ENCODE measurements at regions of chr5 and their contacts with region 1.

Region 1: DNA sequence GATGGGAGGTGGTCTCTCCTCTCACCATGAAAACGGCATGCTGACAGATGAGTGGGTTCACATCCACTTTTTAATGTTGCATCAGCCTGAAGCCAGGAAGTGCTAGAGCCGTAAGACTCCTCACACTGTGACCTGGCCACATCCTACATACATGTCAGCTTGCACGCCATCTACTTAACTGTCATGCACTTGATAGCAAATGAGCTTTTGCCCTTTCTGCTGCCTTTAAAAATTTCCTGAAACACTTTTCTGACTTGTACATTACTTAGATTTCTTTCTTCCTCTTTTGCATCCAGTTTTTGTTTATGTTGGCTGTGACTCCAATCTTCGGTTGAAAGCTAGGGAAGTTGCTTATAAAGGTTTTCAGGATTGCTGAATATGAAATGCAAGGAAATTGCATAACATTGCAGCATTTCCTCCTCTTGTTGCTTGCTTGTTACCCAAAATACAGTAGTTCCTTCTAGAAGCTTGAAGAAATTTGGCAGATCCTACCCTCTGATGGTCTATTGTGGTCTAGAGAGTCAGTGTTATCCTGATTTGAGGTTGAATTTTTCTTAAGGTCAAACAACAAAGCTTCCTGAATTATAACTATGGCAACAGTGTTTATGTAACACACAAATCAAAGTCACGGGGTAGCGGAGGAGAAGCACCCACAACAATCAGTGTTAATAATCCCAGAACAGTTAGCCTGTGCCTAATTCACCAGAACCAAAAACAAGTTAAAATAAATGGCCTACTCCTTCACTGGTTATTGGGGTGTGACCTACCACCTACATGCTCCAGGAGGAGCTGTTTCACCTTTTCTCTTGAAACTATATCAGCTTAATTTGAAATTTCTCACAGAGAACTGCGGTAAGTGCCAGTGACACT is 232.5 kb downstream of the ARHGAP26 start:
- DNase-seq: no peak
- H3K4me3 ChIP-seq: no peak overlapping the region
- H3K27ac ChIP-seq: no peak overlapping the region; the same call in 1 of the 2 replicates
- H3K4me1 ChIP-seq: peaks cover 0 to 3% (median 3%) of the 10 kb centered on the region in 4 experiments; a peak in 4 of 7 replicates
- H3K27me3 ChIP-seq: no peaks in the 10 kb centered on the region
- CTCF ChIP-seq: peak in 2 of 3 experiments; percentile 42 to 68; a peak in 3 of 4 replicates
- EP300 ChIP-seq: no peak
- POLR2A ChIP-seq: no peak
- RAD21 ChIP-seq: peak; percentile 68 to 71

Region 2: GRCh38 chr5:142984525-142984924 is 18.2 kb before region 1 on chr5:
- CTCF ChIA-PET with region 1: interaction called, 13 read pairs
- POLR2A ChIA-PET with region 1: no interaction called
- DNase-seq: no peak
- H3K4me3 ChIP-seq: no peak overlapping the region
- H3K27ac ChIP-seq: no peak overlapping the region
- H3K4me1 ChIP-seq: peaks cover 2 to 13% (median 11%) of the 10 kb centered on the region in 4 experiments
- H3K27me3 ChIP-seq: no peaks in the 10 kb centered on the region
- CTCF ChIP-seq: no peak
- EP300 ChIP-seq: no peak
- POLR2A ChIP-seq: no peak
- RAD21 ChIP-seq: no peak

Region 3: DNA sequence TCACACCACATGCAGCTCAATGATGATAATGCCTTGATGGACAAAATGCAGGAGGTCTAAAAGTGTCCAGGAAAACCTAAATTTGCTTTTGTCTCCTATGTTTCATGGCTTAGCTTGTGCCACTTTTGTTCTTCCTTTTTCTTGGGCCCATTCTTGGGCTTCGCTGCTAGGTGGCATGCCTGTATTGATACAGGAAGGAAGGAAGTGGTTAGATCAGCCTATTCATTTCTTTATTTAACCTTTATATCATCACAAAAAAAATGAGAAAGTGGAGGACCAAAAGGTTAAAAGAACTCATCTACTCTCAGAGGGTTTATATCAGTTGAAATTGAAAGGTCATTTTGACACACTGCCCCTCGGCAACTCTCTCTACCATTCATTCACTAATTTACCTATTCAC is 27.7 kb after region 1 on chr5:
- CTCF ChIA-PET with region 1: no interaction called
- POLR2A ChIA-PET with region 1: no interaction called
- DNase-seq: no peak
- H3K4me3 ChIP-seq: no peak overlapping the region
- H3K27ac ChIP-seq: no peak overlapping the region
- H3K4me1 ChIP-seq: no peaks in the 10 kb centered on the region; a peak in 1 of 7 replicates
- H3K27me3 ChIP-seq: no peaks in the 10 kb centered on the region; a peak in 1 of 7 replicates
- CTCF ChIP-seq: no peak
- EP300 ChIP-seq: no peak
- POLR2A ChIP-seq: no peak
- RAD21 ChIP-seq: no peak

Measured in H1 (cell line).